B cell (primary cell): ENCODE measurements at regions of chr2 and their contacts with region 1.

Region 1: DNA sequence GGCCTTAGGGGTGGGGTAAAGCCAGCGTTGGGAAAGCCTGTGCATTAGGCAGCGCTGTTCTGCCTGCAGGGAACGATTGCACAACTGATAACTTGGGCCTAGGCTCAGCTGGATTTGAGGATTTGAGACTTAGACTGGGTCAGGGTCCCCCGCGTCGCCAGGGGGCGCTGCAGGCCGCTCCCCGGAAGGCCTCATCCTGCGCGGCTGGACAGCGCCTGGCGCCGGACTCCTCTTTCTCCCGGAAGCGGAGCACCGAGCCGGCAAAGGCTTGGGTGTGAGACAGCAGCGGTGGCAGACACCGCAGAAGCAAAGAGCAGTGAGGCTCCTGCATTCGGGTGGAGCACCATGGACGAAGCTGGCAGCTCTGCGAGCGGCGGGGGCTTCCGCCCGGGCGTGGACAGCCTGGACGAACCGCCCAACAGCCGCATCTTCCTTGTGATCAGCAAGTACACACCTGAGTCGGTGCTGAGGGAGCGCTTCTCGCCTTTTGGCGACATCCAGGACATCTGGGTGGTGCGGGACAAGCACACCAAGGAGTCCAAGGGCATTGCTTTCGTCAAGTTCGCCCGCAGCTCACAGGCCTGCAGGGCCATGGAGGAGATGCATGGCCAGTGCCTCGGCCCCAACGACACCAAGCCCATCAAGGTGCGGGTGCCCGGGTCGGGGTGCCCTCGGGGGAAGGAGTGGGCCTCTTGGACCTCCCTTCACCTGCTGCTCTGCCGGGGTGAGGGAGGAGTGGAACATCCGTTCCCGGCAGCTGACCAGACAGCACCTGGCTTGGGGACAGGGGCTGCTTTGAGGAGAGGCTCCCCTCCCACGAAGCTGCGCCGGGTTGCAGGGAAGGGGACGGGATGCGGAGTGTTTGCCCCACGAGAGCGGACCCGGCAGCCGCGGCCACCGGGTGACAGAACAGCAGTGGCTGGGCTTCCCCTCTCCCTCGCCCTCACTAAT is at the start of gene RBM45:
- DNase-seq: peak; percentile 87
- ATAC-seq: peak; percentile 92
- H3K4me3 ChIP-seq: peak within 1 kb of the TSS; percentile 46 to 95 (median 76)
- H3K4me3 Mint-ChIP-seq: peak within 1 kb of the TSS; percentile 97
- H3K27ac ChIP-seq: peak within 1 kb of the TSS; percentile 43 to 77
- H3K27ac Mint-ChIP-seq: peak within 1 kb of the TSS; percentile 85
- H3K4me1 ChIP-seq: peaks cover 12% of the 10 kb centered on the region in 2 donors
- H3K4me1 Mint-ChIP-seq: peaks cover 39% of the 10 kb centered on the region
- H3K27me3 ChIP-seq: no peaks in the 10 kb centered on the region
- H3K27me3 Mint-ChIP-seq: peaks cover under 1% of the 10 kb centered on the region
- CTCF ChIP-seq: peak; percentile 99
- total RNA-seq, gene RBM45: 20.5 and 24.0 TPM in 2 replicates

Region 2: GRCh38 chr2:177629357-177630024 is 483.0 kb before region 1 on chr2:
- CTCF ChIA-PET with region 1: no interaction called
- POLR2A ChIA-PET with region 1: no interaction called
- intact Hi-C with region 1: loop called (anchors 10 kb)
- DNase-seq: no peak
- ATAC-seq: no peak
- H3K4me3 ChIP-seq: no peak overlapping the region
- H3K4me3 Mint-ChIP-seq: no peak overlapping the region
- H3K27ac ChIP-seq: no peak overlapping the region
- H3K27ac Mint-ChIP-seq: no peak overlapping the region
- H3K4me1 ChIP-seq: no peaks in the 10 kb centered on the region
- H3K4me1 Mint-ChIP-seq: peaks cover 15% of the 10 kb centered on the region
- H3K27me3 ChIP-seq: no peaks in the 10 kb centered on the region
- H3K27me3 Mint-ChIP-seq: peaks cover 13% of the 10 kb centered on the region
- CTCF ChIP-seq: no peak

Region 3: GRCh38 chr2:178188466-178188865 is 76.0 kb after region 1 on chr2:
- CTCF ChIA-PET with region 1: no interaction called
- POLR2A ChIA-PET with region 1: no interaction called
- intact Hi-C with region 1: no loop called
- DNase-seq: no peak
- ATAC-seq: no peak
- H3K4me3 ChIP-seq: no peak overlapping the region
- H3K4me3 Mint-ChIP-seq: no peak overlapping the region
- H3K27ac ChIP-seq: no peak overlapping the region
- H3K27ac Mint-ChIP-seq: no peak overlapping the region
- H3K4me1 ChIP-seq: peaks cover under 1 to 2% of the 10 kb centered on the region in 2 donors
- H3K4me1 Mint-ChIP-seq: peaks cover 4% of the 10 kb centered on the region
- H3K27me3 ChIP-seq: peaks cover 0 to 19% (median 7%) of the 10 kb centered on the region in 4 experiments
- H3K27me3 Mint-ChIP-seq: peaks cover 41% of the 10 kb centered on the region
- CTCF ChIP-seq: no peak

Region 4: GRCh38 chr2:178225006-178225805 is 112.7 kb after region 1 on chr2:
- CTCF ChIA-PET with region 1: no interaction called
- POLR2A ChIA-PET with region 1: no interaction called
- intact Hi-C with region 1: no loop called
- DNase-seq: no peak
- ATAC-seq: no peak
- H3K4me3 ChIP-seq: no peak overlapping the region
- H3K4me3 Mint-ChIP-seq: no peak overlapping the region
- H3K27ac ChIP-seq: no peak overlapping the region
- H3K27ac Mint-ChIP-seq: no peak overlapping the region
- H3K4me1 ChIP-seq: no peaks in the 10 kb centered on the region
- H3K4me1 Mint-ChIP-seq: no peaks in the 10 kb centered on the region
- H3K27me3 ChIP-seq: peaks cover 0 to 9% (median 3%) of the 10 kb centered on the region in 4 experiments
- H3K27me3 Mint-ChIP-seq: peaks cover 36% of the 10 kb centered on the region
- CTCF ChIP-seq: no peak

Region 5: DNA sequence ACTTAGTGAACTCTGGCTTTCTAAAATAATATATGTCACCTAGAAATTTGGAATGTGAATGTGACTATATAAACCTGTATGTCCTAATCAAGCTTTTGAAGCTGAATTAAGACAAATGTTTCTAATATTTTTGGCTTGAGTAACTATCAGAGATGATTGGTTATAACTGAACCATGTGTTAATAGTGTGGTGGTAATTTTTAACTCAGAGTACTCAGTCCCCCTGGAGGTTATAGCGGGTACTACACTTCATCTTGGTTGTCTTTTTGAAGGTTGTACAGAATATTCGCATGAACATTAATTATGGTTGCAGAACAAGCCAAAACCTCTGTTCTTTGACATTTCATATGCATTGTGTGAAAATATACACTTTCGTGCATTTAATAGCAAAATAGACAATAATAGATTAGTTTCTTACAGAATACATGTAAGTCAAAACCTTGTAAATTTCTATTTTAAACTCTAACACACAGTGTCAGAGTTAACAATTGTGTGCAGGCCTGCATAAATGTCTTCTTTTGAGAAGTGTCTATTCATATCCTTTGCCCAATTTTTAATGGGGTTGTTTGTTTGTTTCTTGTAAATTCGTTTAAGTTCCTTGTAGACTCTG is 167.9 kb after region 1 on chr2:
- CTCF ChIA-PET with region 1: interaction called, 4 read pairs
- POLR2A ChIA-PET with region 1: no interaction called
- intact Hi-C with region 1: loop called (anchors 1 kb)
- DNase-seq: peak; percentile 36
- ATAC-seq: peak; percentile 64
- H3K4me3 ChIP-seq: no peak overlapping the region
- H3K4me3 Mint-ChIP-seq: no peak overlapping the region
- H3K27ac ChIP-seq: no peak overlapping the region
- H3K27ac Mint-ChIP-seq: no peak overlapping the region
- H3K4me1 ChIP-seq: no peaks in the 10 kb centered on the region
- H3K4me1 Mint-ChIP-seq: no peaks in the 10 kb centered on the region
- H3K27me3 ChIP-seq: no peaks in the 10 kb centered on the region
- H3K27me3 Mint-ChIP-seq: peaks cover 20% of the 10 kb centered on the region
- CTCF ChIP-seq: peak; percentile 84

Region 6: DNA sequence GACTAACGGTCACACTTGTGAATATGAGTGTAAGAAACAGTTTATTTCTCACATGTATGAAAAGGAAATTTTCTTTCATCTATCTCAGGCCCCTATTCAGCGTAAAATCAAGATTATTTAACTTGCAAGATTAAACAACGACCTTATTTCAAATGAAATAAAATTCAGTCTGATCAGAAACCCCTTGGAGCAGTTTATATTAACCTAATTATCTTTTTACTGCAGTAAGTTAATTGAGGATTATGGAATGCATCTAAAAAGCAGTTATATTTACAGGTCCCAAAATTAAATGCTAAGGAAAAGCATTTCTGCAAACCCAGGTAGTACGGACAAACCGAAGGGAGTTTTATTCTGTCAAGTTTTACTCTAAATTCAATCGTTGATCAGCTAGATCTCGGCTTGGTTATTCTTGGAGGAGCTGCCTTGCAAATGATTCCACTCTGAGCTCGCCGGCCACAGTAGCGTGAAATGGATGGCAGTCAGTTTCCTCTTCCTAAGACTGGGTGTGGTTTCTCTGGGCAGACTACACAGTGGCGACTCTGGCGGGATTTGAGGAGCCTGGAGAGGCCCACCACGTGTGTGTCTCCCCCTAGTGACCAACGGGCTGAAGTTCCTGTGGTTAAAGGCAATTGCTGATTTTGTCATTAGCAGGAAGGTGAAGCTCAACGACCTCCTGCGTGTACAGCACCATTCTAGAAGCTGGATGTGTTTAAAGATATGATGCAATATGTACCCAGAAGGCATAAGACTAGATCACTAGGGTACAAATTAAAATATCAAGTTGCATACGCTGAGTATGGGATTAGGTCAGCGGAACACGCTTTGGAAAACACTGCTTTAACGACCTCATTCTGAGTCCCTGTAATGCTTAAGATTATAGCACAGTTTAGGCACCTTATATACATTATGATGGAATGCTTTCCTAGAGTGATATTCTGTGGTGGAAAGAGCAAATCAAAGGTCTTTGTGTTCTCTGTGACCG is 302.1 kb after region 1 on chr2:
- CTCF ChIA-PET with region 1: interaction called, 5 read pairs
- POLR2A ChIA-PET with region 1: no interaction called
- intact Hi-C with region 1: loop called (anchors 1 kb)
- DNase-seq: peak; percentile 85
- ATAC-seq: peak; percentile 73
- H3K4me3 ChIP-seq: peak overlapping the region; percentile 52 to 96 (median 71)
- H3K4me3 Mint-ChIP-seq: peak overlapping the region; percentile 88
- H3K27ac ChIP-seq: peak overlapping the region; percentile 57 to 78
- H3K27ac Mint-ChIP-seq: peak overlapping the region; percentile 93
- H3K4me1 ChIP-seq: peaks cover 10 to 15% of the 10 kb centered on the region in 2 donors
- H3K4me1 Mint-ChIP-seq: peaks cover 19% of the 10 kb centered on the region
- H3K27me3 ChIP-seq: no peaks in the 10 kb centered on the region
- H3K27me3 Mint-ChIP-seq: no peaks in the 10 kb centered on the region
- CTCF ChIP-seq: peak; percentile 95

Region 7: DNA sequence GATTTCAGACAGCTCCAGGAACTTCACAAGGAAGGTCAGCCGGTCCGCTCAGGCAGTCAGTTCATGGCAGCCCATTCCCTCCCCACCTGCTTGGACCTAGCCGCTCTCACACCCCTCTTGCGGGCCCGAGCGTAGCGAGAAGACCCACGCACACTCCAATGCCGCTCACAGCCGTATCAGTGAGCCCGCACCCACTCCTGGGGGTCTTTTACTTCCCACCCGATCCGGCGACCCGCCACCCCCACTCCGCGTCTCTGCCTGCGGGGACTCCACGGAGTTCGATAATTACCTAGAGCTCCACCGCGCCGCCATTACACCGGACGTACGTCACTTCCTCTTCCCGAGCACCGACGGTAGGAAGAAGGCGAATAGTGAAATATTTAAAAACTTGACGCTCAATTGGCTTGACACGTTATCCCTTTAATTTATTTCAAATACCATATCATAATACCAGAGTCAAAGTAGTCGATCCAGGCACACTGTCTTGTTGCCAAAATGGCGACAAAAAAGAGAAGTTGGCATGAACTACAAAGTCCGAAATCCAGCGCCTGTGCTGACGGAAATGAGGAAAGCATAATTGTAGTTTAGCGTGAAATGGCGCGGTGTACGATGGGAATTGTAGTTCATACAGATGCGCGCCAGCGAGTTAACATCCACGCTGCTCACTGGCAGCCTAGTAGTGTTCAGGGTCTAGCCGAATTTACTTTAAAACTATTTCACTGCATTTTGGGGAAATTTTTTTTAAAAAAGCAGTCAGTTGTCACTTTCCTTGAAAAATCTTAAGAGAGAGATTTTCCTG is 1894.5 kb after region 1 on chr2 and contains the start of gene CWC22:
- CTCF ChIA-PET with region 1: no interaction called
- POLR2A ChIA-PET with region 1: no interaction called
- intact Hi-C with region 1: loop called (anchors 2 kb)
- DNase-seq: peak; percentile 96
- ATAC-seq: peak; percentile 95
- H3K4me3 ChIP-seq: peak within 1 kb of the TSS; percentile 89 to 98 (median 91)
- H3K4me3 Mint-ChIP-seq: peak within 1 kb of the TSS; percentile 94
- H3K27ac ChIP-seq: peak within 1 kb of the TSS; percentile 88 to 99
- H3K27ac Mint-ChIP-seq: peak within 1 kb of the TSS; percentile 99
- H3K4me1 ChIP-seq: peaks cover 12 to 18% of the 10 kb centered on the region in 2 donors
- H3K4me1 Mint-ChIP-seq: peaks cover 39% of the 10 kb centered on the region
- H3K27me3 ChIP-seq: no peaks in the 10 kb centered on the region
- H3K27me3 Mint-ChIP-seq: no peaks in the 10 kb centered on the region
- CTCF ChIP-seq: no peak
- total RNA-seq, gene CWC22: 28.6 and 28.7 TPM in 2 replicates